ENCODE measurements at regions of chr12 and their contacts with region 1.

Region 1: GRCh38 chr12:47904713-47905310 is at the start of gene VDR:
- DNase-seq: peak; percentile 69
- H3K4me3 Mint-ChIP-seq: peak within 1 kb of the TSS; percentile 78
- H3K27ac Mint-ChIP-seq: peak within 1 kb of the TSS; percentile 68
- H3K4me1 Mint-ChIP-seq: peaks cover 34% of the 10 kb centered on the region
- H3K27me3 Mint-ChIP-seq: peaks cover 13% of the 10 kb centered on the region
- CTCF ChIP-seq: no peak
- total RNA-seq, gene VDR: 10.1 and 12.5 TPM in 2 replicates

Region 2: DNA sequence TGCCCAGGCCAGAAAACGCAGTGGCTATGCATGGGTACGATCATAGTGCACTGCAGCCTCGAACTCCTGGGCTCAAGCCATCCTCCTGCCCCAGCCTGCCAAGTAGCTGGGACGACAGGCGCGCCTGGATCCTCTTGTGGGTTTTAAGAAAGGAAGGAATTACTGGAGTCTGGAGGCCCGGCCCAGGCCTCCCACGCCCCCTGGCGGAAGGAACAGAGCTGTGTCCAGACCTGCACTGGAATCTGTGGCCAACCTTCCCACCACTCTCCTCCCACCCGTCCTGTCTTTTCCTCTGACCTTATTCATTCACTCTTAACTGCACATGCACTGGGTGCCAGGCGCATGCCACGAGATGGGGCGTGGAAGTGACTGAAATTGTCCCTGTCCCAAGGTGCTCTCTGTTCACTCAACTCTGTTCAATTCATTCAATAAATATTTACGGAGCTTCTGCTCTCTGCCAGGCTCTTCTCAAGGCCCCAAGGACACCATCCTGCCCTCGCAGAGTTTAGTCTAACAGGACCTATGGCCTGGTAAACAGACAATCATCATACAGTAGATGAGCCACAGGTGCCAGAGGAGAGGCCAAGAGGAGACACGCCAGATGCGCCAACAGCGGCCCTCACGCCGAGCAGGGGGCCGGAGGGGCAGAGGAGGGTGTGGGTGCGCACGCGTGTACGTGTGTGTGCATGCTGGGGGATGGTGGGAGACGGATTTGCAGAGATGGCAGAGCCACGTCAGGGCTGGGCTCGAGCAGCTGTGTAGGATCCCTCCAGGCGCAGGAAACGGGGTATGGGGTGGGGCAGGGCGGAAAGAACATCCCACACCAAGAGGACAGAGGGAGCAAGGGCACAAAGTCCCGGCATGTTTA is 44.9 kb after region 1 on chr12:
- CTCF ChIA-PET with region 1: interaction called, 31 read pairs
- intact Hi-C with region 1: loop called (anchors 1 kb)
- DNase-seq: peak; percentile 82
- H3K4me3 Mint-ChIP-seq: no peak overlapping the region
- H3K27ac Mint-ChIP-seq: no peak overlapping the region
- H3K4me1 Mint-ChIP-seq: peaks cover 8% of the 10 kb centered on the region
- H3K27me3 Mint-ChIP-seq: peaks cover 43% of the 10 kb centered on the region
- CTCF ChIP-seq: peak; percentile 59

Region 3: DNA sequence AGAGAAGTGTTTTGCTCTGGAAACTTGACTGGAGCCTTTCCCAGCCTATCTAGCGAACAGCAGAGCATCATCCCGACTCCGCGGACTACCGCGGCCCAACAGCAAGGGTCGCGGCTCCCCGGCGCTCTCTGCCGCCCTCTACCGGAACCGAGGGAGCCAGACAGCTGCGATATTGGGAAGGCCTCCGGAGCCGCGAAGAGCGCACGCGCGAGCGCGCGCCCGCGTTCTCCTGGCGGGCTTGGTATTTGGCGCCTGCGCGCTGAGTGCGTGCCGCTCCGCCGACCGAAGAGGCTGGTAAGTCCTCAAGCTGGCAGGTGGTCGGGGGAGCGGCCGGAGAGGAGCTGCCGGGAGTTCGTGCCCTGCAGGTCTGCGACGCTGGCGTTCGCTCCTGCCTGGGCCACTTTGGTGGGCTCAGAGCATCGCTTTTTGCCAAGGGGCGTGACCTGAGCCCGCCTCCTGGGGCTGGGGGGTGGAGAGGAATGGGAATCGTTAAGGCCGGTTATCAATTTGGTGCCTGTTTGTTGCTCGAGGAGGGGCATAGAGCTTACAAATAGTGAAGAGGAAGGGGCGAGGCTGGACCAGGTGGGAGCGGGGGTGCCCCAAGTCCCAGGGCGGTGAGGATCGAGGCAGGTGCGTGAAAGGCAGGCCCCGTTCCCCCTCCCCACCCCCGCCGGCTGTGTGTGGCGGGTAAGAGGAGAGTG is 58.7 kb after region 1 on chr12 and contains the start of gene TMEM106C:
- CTCF ChIA-PET with region 1: interaction called, 14 read pairs
- intact Hi-C with region 1: no loop called
- DNase-seq: peak; percentile 83
- H3K4me3 Mint-ChIP-seq: peak within 1 kb of the TSS; percentile 100
- H3K27ac Mint-ChIP-seq: peak within 1 kb of the TSS; percentile 85
- H3K4me1 Mint-ChIP-seq: no peaks in the 10 kb centered on the region
- H3K27me3 Mint-ChIP-seq: peaks cover 42% of the 10 kb centered on the region
- CTCF ChIP-seq: peak; percentile 75
- total RNA-seq, gene TMEM106C: 67.2 and 77.3 TPM in 2 replicates

Region 4: GRCh38 chr12:48165094-48165981 is 260.5 kb after region 1 on chr12:
- CTCF ChIA-PET with region 1: no interaction called
- intact Hi-C with region 1: loop called (anchors 10 kb)
- DNase-seq: peak; percentile 52
- H3K4me3 Mint-ChIP-seq: no peak overlapping the region
- H3K27ac Mint-ChIP-seq: no peak overlapping the region
- H3K4me1 Mint-ChIP-seq: no peaks in the 10 kb centered on the region
- H3K27me3 Mint-ChIP-seq: peaks cover 38% of the 10 kb centered on the region
- CTCF ChIP-seq: peak; percentile 43